Activated naive CD4-positive, alpha-beta T cell treated with anti-CD3 and anti-CD28 coated beads for 36 hours (primary cell): ENCODE measurements at regions of chr11 and their contacts with region 1.

Region 1: GRCh38 chr11:3984896-3985295 is 109.7 kb upstream of the RRM1 start:
- DNase-seq: peak; percentile 80
- H3K4me3 Mint-ChIP-seq: no peak overlapping the region
- H3K27ac Mint-ChIP-seq: peak overlapping the region; percentile 55
- H3K4me1 Mint-ChIP-seq: peaks cover 74% of the 10 kb centered on the region
- H3K27me3 Mint-ChIP-seq: no peaks in the 10 kb centered on the region

Region 2: DNA sequence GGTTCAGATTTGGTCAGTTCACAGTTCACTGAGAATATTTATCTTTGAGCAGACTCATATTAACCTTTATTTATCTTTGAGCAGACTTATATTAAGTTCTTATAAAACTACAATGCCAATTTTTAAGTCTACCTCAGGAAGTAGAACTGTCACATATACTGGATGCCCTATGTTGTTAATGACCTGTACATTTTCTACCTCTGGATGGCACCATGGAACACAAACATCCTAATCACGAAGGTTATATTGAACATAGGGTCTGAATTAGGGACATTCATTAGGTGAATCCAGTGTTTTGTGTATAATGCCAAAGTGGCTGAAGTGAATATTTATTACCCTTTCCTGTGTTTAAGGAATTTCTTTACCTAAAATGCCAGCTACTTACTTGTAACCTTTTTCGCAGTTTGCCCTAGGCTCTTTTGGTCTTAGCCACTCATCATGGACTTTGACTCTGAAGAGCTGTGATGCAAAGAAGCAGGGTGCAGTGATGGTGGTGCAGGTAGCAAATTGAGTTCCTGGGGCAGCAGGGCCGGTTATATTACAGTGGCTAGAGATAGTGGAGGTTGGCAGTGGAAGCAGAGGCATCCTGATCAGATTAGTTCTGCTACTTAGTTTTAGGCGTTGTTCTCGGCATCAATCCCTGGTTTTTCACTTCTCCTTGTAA is 57.6 kb before region 1 on chr11:
- CTCF ChIA-PET with region 1: interaction called, 4 read pairs
- intact Hi-C with region 1: loop called (anchors 2 kb)
- DNase-seq: no peak
- H3K4me3 Mint-ChIP-seq: no peak overlapping the region
- H3K27ac Mint-ChIP-seq: no peak overlapping the region
- H3K4me1 Mint-ChIP-seq: peaks cover 18% of the 10 kb centered on the region
- H3K27me3 Mint-ChIP-seq: no peaks in the 10 kb centered on the region

Region 3: DNA sequence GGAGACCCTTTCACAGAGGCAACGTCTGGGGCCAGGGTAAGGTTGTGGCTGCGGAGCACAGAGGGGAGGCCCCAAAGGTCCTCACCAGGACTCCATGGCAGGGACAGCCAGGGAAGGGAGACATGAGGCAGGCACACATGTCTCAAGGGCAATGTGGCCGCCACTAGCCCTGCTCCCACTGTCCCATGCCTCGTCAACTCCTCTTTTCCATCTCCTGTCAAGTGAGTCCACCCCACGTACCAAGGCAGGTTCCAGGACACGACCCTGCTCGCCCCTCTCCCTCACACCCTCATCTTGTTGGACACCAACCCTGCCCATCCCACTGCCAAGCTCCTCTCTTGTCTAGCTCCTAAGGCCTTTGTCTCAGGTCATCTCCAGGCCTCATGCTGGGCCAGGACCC is 182.9 kb after region 1 on chr11:
- CTCF ChIA-PET with region 1: no interaction called
- intact Hi-C with region 1: no loop called
- DNase-seq: no peak
- H3K4me3 Mint-ChIP-seq: no peak overlapping the region
- H3K27ac Mint-ChIP-seq: no peak overlapping the region
- H3K4me1 Mint-ChIP-seq: peaks cover 5% of the 10 kb centered on the region
- H3K27me3 Mint-ChIP-seq: no peaks in the 10 kb centered on the region